ENCODE measurements at regions of chr10 and their contacts with region 1.

Region 1: GRCh38 chr10:92848441-92849233 is at the start of gene EXOC6:
- DNase-seq: peak; percentile 96
- ATAC-seq: peak; percentile 88
- H3K4me3 ChIP-seq: peak within 1 kb of the TSS; percentile 61 to 83 (median 65)
- H3K4me3 Mint-ChIP-seq: peak within 1 kb of the TSS; percentile 91
- H3K27ac ChIP-seq: peak within 1 kb of the TSS; percentile 84 to 85
- H3K27ac Mint-ChIP-seq: peak within 1 kb of the TSS; percentile 93
- H3K4me1 ChIP-seq: peaks cover 23 to 26% of the 10 kb centered on the region in 2 donors
- H3K4me1 Mint-ChIP-seq: peaks cover 34% of the 10 kb centered on the region
- H3K27me3 ChIP-seq: no peaks in the 10 kb centered on the region
- H3K27me3 Mint-ChIP-seq: no peaks in the 10 kb centered on the region
- CTCF ChIP-seq: peak; percentile 54
- total RNA-seq, gene EXOC6: 22.6 and 25.6 TPM in 2 replicates

Region 2: DNA sequence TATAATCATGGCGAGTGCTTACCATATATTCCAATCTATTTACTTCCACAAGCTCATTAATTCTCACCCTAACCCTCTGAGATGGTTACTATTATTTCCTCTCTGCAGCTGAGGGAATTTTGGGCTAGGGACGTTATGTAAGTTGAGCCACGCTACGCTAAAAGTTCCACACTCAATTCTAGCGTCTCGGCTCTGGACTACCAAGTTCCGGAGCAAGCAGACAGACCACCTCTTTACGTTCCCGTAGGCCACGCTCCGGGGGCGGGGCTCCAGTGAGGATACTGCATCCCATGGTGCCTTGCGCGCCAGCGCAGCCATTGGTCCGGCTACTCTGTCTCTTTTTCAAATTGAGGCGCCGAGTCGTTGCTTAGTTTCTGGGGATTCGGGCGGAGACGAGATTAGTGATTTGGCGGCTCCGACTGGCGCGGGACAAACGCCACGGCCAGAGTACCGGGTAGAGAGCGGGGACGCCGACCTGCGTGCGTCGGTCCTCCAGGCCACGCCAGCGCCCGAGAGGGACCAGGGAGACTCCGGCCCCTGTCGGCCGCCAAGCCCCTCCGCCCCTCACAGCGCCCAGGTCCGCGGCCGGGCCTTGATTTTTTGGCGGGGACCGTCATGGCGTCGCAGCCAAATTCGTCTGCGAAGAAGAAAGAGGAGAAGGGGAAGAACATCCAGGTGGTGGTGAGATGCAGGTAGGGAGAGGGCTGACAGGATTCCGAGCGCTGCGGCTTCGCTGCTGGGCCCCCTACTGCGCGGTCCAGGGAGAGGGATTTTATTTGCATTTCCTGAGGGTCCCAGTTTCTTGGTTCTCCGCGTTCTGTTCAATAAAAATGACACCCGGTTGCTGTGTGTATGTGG is 255.6 kb before region 1 on chr10 and contains the start of gene KIF11:
- CTCF ChIA-PET with region 1: interaction called, 13 read pairs
- POLR2A ChIA-PET with region 1: interaction called, 13 read pairs
- intact Hi-C with region 1: loop called (anchors 1 kb)
- DNase-seq: peak; percentile 96
- ATAC-seq: peak; percentile 82
- H3K4me3 ChIP-seq: peak within 1 kb of the TSS; percentile 65 to 95 (median 84)
- H3K4me3 Mint-ChIP-seq: peak within 1 kb of the TSS; percentile 99
- H3K27ac ChIP-seq: peak within 1 kb of the TSS; percentile 82 to 92
- H3K27ac Mint-ChIP-seq: peak within 1 kb of the TSS; percentile 99
- H3K4me1 ChIP-seq: peaks cover 9 to 22% of the 10 kb centered on the region in 2 donors
- H3K4me1 Mint-ChIP-seq: peaks cover 41% of the 10 kb centered on the region
- H3K27me3 ChIP-seq: no peaks in the 10 kb centered on the region
- H3K27me3 Mint-ChIP-seq: no peaks in the 10 kb centered on the region
- CTCF ChIP-seq: no peak
- total RNA-seq, gene KIF11: 1.8 and 2.0 TPM in 2 replicates

Region 3: DNA sequence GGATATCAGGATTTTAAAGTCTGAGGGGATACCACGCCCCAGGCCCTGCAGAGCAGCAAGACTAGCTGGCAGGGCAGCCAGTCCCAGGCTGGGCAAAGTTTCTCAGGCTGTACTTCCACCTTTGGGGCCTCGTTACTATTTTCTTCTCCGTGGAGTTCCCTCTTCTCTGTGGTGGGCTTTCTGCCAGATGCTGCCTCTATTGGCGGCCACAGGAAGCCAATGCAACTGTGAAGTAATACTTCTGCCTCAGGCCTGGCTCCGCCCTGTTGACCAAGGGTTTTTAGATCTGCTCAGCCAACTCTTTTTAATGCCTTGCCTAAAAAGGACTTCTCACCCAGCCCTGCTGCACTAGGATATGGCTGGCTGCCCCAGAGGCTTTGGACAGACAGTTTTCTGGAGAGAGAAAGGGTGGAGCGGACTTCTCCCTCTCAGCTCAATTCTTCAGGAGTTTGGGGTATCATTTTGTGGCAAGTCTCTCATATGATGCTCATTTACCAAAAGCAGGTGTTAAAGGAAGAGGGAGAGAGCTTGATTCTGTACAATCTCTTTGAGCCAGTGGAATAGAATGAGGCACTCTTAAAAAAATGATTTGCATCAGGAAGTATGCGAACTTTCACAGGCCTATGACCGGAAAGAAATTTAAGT is 91.4 kb before region 1 on chr10:
- CTCF ChIA-PET with region 1: interaction called, 7 read pairs
- POLR2A ChIA-PET with region 1: no interaction called
- intact Hi-C with region 1: loop called (anchors 1 kb)
- DNase-seq: peak; percentile 86
- ATAC-seq: peak; percentile 66
- H3K4me3 ChIP-seq: peak overlapping the region; percentile 16 to 36 (median 29)
- H3K4me3 Mint-ChIP-seq: peak overlapping the region; percentile 75
- H3K27ac ChIP-seq: peak overlapping the region; percentile 84 to 87
- H3K27ac Mint-ChIP-seq: peak overlapping the region; percentile 97
- H3K4me1 ChIP-seq: peaks cover 65 to 73% of the 10 kb centered on the region in 2 donors
- H3K4me1 Mint-ChIP-seq: peaks cover 75% of the 10 kb centered on the region
- H3K27me3 ChIP-seq: no peaks in the 10 kb centered on the region
- H3K27me3 Mint-ChIP-seq: no peaks in the 10 kb centered on the region
- CTCF ChIP-seq: peak; percentile 42

Region 4: GRCh38 chr10:92790440-92790839 is 58.2 kb before region 1 on chr10:
- CTCF ChIA-PET with region 1: interaction called, 10 read pairs
- POLR2A ChIA-PET with region 1: no interaction called
- intact Hi-C with region 1: loop called (anchors 5 kb)
- DNase-seq: peak; percentile 69
- ATAC-seq: peak; percentile 63
- H3K4me3 ChIP-seq: peak overlapping the region in 1 of 5 experiments; percentile 23
- H3K4me3 Mint-ChIP-seq: peak overlapping the region; percentile 57
- H3K27ac ChIP-seq: peak overlapping the region; percentile 70 to 82
- H3K27ac Mint-ChIP-seq: peak overlapping the region; percentile 92
- H3K4me1 ChIP-seq: peaks cover 44 to 47% of the 10 kb centered on the region in 2 donors
- H3K4me1 Mint-ChIP-seq: peaks cover 40% of the 10 kb centered on the region
- H3K27me3 ChIP-seq: no peaks in the 10 kb centered on the region
- H3K27me3 Mint-ChIP-seq: no peaks in the 10 kb centered on the region
- CTCF ChIP-seq: no peak

Region 5: GRCh38 chr10:92886334-92886961 is 37.8 kb after region 1 on chr10:
- CTCF ChIA-PET with region 1: interaction called, 22 read pairs
- POLR2A ChIA-PET with region 1: no interaction called
- intact Hi-C with region 1: loop called (anchors 2 kb)
- DNase-seq: no peak
- ATAC-seq: no peak
- H3K4me3 ChIP-seq: no peak overlapping the region
- H3K4me3 Mint-ChIP-seq: no peak overlapping the region
- H3K27ac ChIP-seq: no peak overlapping the region
- H3K27ac Mint-ChIP-seq: no peak overlapping the region
- H3K4me1 ChIP-seq: no peaks in the 10 kb centered on the region
- H3K4me1 Mint-ChIP-seq: peaks cover 9% of the 10 kb centered on the region
- H3K27me3 ChIP-seq: no peaks in the 10 kb centered on the region
- H3K27me3 Mint-ChIP-seq: no peaks in the 10 kb centered on the region
- CTCF ChIP-seq: no peak

Measured in B cell (primary cell).